ENCODE measurements at regions of chr2 and their contacts with region 1.

Region 1: DNA sequence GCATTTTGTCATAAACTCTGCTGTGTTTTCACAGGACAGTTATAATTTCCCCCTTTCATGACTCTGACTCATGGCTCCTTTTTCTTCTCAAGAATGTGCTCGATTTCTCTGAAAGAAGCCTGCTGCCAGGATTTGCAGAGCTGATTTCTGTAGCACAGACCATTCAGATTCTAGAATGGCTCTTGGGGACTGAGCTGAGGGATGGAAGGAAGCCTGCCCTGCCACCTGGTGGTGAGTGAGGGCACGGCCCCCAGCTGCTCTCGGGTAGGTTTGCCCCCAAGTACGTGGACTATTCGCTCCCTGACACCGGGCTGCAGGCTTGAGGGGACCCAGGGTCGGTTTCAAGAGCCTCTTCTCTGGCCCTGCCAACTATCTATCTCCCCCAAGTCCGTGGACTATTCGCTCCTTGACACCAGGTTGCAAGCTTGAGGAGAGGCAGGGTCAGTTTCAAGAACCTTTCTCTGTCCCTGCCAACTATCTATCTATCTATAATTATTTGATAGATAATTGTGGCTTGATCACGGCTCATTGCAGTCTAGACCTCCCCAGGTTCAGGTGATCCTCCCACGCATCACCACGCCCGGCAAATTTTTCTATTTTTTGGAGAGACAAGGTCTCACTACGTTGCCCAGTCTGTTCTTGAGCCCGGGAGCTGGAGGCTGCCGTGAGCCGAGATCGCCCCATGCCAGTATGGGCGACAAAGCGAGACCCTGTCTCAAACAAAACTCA is 1.4 kb upstream of the SMYD5 start:
- DNase-seq: peak; percentile 83
- ATAC-seq: peak; percentile 76
- H3K4me3 Mint-ChIP-seq: peak overlapping the region; percentile 89
- H3K27ac Mint-ChIP-seq: no peak overlapping the region
- H3K4me1 Mint-ChIP-seq: peaks cover 30% of the 10 kb centered on the region
- H3K27me3 Mint-ChIP-seq: peaks cover 2% of the 10 kb centered on the region

Region 2: GRCh38 chr2:73202156-73203054 is 10.2 kb before region 1 on chr2 and contains the start of gene NOTO:
- CTCF ChIA-PET with region 1: interaction called, 11 read pairs
- DNase-seq: no peak
- ATAC-seq: peak; percentile 61
- H3K4me3 Mint-ChIP-seq: no peak within 1 kb of the TSS
- H3K27ac Mint-ChIP-seq: no peak within 1 kb of the TSS
- H3K4me1 Mint-ChIP-seq: peaks cover 2% of the 10 kb centered on the region
- H3K27me3 Mint-ChIP-seq: peaks cover 66% of the 10 kb centered on the region
- total RNA-seq, gene NOTO: not detected

Region 3: GRCh38 chr2:73233154-73233931 is 20.7 kb after region 1 on chr2 and contains the start of gene PRADC1:
- CTCF ChIA-PET with region 1: interaction called, 54 read pairs
- DNase-seq: peak; percentile 99
- ATAC-seq: peak; percentile 91
- H3K4me3 Mint-ChIP-seq: peak within 1 kb of the TSS; percentile 88
- H3K27ac Mint-ChIP-seq: peak within 1 kb of the TSS; percentile 89
- H3K4me1 Mint-ChIP-seq: peaks cover 34% of the 10 kb centered on the region
- H3K27me3 Mint-ChIP-seq: no peaks in the 10 kb centered on the region
- total RNA-seq, gene PRADC1: 13.7 to 14.7 TPM

Region 4: GRCh38 chr2:73503992-73504570 is 291.5 kb after region 1 on chr2:
- CTCF ChIA-PET with region 1: no interaction called
- DNase-seq: no peak
- ATAC-seq: no peak
- H3K4me3 Mint-ChIP-seq: no peak overlapping the region
- H3K27ac Mint-ChIP-seq: no peak overlapping the region
- H3K4me1 Mint-ChIP-seq: no peaks in the 10 kb centered on the region
- H3K27me3 Mint-ChIP-seq: no peaks in the 10 kb centered on the region